Calu3 (cell line): ENCODE measurements at regions of chr7 and their contacts with region 1.

Region 1: GRCh38 chr7:53366316-53366715 is 330.9 kb downstream of the POM121L12 start:
- DNase-seq: no peak
- H3K4me3 Mint-ChIP-seq: no peak overlapping the region
- H3K27ac Mint-ChIP-seq: no peak overlapping the region
- H3K4me1 Mint-ChIP-seq: no peaks in the 10 kb centered on the region
- H3K27me3 Mint-ChIP-seq: no peaks in the 10 kb centered on the region
- CTCF ChIP-seq: no peak

Region 2: DNA sequence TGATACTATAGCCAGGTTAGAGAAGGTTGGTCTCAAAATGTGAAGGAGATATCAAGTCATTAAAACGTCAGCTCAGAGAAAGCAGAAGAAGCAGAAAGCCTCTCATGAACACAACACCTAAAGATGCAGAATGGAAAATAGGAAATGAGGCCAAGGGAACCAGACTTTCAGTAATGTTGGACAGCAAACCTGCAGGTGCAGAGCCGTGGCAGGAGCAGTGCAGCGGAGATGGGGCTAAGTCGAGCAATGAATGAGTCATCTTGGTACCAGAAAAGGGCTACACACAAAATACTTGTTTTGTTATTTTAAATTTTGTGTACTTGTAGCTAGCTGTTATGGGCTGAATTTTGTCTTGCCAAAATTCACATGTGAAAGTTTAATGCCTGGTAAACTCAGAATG is 810.5 kb before region 1 on chr7:
- CTCF ChIA-PET with region 1: interaction called, 13 read pairs
- intact Hi-C with region 1: no loop called
- DNase-seq: no peak
- H3K4me3 Mint-ChIP-seq: no peak overlapping the region
- H3K27ac Mint-ChIP-seq: no peak overlapping the region
- H3K4me1 Mint-ChIP-seq: no peaks in the 10 kb centered on the region
- H3K27me3 Mint-ChIP-seq: no peaks in the 10 kb centered on the region
- CTCF ChIP-seq: no peak